ENCODE measurements at regions of chr4 and their contacts with region 1.

Region 1: GRCh38 chr4:173878701-173879100 is 348.7 kb upstream of the HAND2 start:
- DNase-seq: peak; percentile 76

Region 2: DNA sequence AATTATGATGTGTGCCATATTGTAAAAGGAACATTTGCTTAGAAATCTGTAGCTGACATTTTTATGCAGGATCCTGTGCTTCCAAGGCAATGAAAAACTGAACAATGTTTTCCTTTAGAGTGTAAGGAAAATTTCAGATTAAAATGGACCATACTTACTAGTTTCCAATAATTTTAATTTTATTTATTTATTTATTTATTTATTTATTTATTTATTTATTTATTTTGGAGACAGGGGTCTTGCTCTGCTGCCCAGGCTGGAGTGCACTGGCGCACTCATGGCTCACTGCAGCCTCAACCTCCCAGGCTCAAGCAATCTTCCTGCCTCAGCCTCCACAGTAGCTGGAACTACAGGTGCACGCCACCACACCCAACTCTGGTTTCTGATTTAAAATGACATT is 21.1 kb after region 1 on chr4:
- intact Hi-C with region 1: no loop called
- DNase-seq: no peak

Region 3: GRCh38 chr4:173935622-173936405 is 57.1 kb after region 1 on chr4:
- intact Hi-C with region 1: loop called in 1 of 2 experiments (anchors 2 kb)
- DNase-seq: no peak

Measured in posterior vena cava (tissue), 2 donors.